ENCODE measurements at regions of chr6 and their contacts with region 1.

Region 1: DNA sequence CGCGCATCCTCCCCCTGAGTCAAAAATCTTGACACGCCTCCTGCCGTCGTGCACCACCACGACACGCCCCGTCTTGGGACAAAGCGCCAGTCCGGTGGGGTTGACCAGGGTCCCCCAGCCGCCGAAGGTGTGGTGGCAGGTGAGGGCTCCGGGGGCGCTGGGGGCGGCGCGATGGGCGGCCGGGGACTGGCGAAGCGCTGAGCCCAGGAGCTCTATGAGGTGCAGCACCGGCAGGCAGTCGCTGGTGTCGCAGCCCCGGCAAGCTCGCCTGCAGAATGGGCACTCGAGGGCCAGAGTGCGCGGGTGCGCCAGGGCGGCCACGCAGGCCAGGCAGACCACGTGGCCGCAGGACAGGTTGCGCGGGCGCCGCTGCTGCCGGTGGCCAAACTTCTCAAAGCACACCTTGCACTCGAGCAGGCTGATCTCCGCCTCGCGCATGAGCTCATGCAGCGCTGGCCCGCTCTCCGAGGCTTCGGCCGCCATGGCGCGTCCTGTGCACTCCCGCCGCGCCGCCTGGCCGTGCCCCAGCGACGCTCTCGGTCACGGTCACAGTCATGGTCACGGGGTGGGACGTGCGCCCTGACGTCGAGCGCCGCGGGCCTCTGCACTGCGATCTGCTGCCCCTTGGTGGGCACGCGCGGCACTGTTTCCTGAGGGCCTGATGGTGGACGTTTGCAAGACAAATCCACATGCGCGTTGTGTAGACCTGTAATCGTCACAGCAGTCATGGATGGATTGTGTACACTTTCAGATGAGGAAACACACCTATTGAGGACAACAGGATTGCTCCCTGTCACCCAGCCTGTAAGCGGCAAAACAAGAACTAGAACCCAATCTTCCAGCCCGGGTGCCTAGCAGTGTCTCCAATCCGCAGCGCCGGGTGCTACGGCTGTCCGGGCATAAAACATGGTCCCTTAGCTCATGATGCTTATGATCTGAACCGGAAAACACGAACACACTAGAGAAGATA is at the start of gene NHLRC1:
- DNase-seq: peak; percentile 32
- H3K4me3 ChIP-seq: peak within 1 kb of the TSS; percentile 53
- H3K27me3 ChIP-seq: no peaks in the 10 kb centered on the region
- CTCF ChIP-seq: peak; percentile 94
- polyA plus RNA-seq, gene NHLRC1: 1.1 and 1.7 TPM in 2 replicates

Region 2: DNA sequence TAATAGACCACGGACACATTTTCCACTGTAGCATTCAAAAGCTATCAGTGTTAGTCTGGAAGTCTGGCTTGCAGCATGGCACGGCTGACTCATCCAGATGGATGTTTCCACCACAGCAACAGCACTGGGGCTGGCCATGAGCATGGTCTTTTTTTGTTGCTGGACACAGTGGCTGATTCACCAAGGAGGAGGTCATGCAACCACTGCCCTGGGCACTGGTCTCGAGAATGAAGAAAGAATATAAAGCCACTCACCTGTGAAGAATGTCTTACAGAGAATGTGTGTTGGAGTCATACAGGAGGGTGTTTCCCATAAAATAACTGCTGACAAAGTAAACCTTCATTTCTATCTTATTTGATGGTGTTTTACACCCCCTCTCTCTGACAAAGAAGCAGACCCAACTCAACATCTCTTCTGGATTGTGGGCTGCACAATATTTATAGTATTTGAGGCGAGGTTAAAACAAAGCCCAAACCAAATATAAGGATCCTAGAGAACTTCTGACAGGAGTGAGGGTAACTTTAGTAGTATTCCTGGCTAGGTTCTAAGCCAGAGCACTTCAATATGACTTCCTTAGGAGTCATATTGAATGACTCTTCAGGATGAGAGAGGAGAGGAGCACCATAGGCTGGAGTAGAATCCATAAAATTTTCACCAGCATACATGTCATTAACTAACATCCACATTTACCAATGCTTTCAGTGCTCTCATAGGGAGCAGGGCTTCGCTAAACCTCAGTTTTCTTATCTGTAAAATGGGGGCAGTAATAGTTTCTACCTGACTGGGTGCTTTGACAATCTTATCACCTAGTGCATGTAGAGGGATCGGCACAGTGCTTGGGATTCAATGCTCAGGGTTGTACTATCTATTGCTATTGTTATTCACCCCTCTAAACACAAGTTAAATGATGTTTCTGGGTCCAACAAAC is 256.3 kb before region 1 on chr6:
- CTCF ChIA-PET with region 1: interaction called, 10 read pairs
- POLR2A ChIA-PET with region 1: no interaction called
- DNase-seq: peak; percentile 78
- H3K4me3 ChIP-seq: no peak overlapping the region
- H3K27me3 ChIP-seq: no peaks in the 10 kb centered on the region
- CTCF ChIP-seq: no peak